Activated CD4-positive, alpha-beta memory T cell treated with anti-CD3 and anti-CD28 coated beads, Interleukin-2, amount 10 ng/mL, durations not matched to agents 7 days and 5 days (primary cell): ENCODE measurements at regions of chr3 and their contacts with region 1.

Region 1: GRCh38 chr3:195850857-195851543 is 39.3 kb upstream of the MUC4 start:
- DNase-seq: peak; percentile 91
- H3K4me3 Mint-ChIP-seq: peak overlapping the region; percentile 2
- H3K27ac Mint-ChIP-seq: no peak overlapping the region
- H3K4me1 Mint-ChIP-seq: peaks cover 7% of the 10 kb centered on the region
- H3K27me3 Mint-ChIP-seq: no peaks in the 10 kb centered on the region

Region 2: GRCh38 chr3:195690951-195691490 is 160.0 kb before region 1 on chr3:
- CTCF ChIA-PET with region 1: no interaction called
- POLR2A ChIA-PET with region 1: no interaction called
- DNase-seq: no peak
- H3K4me3 Mint-ChIP-seq: no peak overlapping the region
- H3K27ac Mint-ChIP-seq: peak overlapping the region; percentile 54
- H3K4me1 Mint-ChIP-seq: peaks cover 26% of the 10 kb centered on the region
- H3K27me3 Mint-ChIP-seq: no peaks in the 10 kb centered on the region

Region 3: DNA sequence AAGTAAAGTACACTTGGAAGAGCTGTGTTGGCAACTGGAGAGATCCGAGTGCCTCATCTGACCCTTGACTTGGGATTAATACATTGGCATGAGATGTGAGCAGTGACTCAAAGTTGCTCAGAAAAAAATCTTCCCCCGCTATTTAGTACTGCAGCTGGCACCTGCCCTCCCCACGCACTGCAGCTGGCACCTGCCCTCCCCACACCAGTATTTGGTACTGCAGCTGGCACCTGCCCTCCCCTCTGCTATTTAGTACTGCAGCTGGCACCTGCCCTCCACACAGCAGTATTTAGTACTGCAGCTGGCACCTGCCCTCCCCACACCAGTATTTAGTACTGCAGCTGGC is 134.2 kb before region 1 on chr3:
- CTCF ChIA-PET with region 1: interaction called, 10 read pairs
- POLR2A ChIA-PET with region 1: no interaction called
- DNase-seq: no peak
- H3K4me3 Mint-ChIP-seq: no peak overlapping the region
- H3K27ac Mint-ChIP-seq: no peak overlapping the region
- H3K4me1 Mint-ChIP-seq: peaks cover 4% of the 10 kb centered on the region
- H3K27me3 Mint-ChIP-seq: no peaks in the 10 kb centered on the region

Region 4: GRCh38 chr3:195801336-195802183 is 49.4 kb before region 1 on chr3:
- CTCF ChIA-PET with region 1: interaction called, 10 read pairs
- POLR2A ChIA-PET with region 1: no interaction called
- DNase-seq: no peak
- H3K4me3 Mint-ChIP-seq: peak overlapping the region; percentile 42
- H3K27ac Mint-ChIP-seq: peak overlapping the region; percentile 71
- H3K4me1 Mint-ChIP-seq: peaks cover 52% of the 10 kb centered on the region
- H3K27me3 Mint-ChIP-seq: peaks cover 13% of the 10 kb centered on the region

Region 5: DNA sequence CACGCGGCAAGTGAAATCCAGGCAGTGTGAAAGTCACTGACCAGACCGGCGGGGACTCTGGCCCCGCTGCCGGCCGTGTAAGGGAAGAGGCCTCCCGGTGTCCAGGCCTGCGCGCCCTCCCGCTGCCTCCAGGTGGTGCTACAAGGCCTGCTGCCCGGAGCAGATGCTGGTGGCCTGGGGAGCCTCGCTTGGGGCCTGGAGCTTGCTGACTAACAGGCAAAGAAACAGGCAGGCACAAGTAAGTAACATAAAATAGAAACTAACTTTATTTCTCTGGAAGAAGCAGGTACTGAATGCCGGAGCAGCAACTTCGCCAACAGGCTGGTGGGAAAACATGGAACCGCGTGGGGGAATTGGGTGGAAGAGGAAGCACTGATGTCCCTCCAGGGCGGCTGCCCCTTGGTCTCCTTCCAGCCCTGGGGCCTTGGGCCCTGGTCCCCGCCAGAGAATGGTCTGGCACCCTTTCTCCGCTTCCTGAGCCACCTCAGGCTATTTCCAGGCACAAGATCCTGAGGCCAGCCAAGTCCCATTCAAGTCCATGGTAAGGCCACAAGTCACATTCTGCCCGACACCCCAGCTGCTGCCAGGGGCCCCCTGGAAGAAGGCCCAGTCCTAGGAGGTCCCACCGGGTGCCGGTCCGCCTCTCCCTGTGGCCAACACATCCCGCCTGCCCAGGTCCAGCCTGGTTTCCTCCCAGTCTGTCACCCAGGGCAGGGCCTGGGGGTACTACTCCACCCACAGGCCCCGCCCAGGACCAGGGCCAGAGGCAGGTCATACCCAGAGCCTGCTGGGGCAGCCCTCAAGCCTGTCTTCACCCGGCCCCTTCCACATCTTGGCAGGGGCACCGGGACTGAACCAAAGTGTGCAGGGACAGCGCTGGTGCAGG is 12.4 kb after region 1 on chr3:
- CTCF ChIA-PET with region 1: interaction called, 24 read pairs
- POLR2A ChIA-PET with region 1: no interaction called
- DNase-seq: peak; percentile 65
- H3K4me3 Mint-ChIP-seq: no peak overlapping the region
- H3K27ac Mint-ChIP-seq: no peak overlapping the region
- H3K4me1 Mint-ChIP-seq: peaks cover 6% of the 10 kb centered on the region
- H3K27me3 Mint-ChIP-seq: peaks cover 5% of the 10 kb centered on the region

Region 6: DNA sequence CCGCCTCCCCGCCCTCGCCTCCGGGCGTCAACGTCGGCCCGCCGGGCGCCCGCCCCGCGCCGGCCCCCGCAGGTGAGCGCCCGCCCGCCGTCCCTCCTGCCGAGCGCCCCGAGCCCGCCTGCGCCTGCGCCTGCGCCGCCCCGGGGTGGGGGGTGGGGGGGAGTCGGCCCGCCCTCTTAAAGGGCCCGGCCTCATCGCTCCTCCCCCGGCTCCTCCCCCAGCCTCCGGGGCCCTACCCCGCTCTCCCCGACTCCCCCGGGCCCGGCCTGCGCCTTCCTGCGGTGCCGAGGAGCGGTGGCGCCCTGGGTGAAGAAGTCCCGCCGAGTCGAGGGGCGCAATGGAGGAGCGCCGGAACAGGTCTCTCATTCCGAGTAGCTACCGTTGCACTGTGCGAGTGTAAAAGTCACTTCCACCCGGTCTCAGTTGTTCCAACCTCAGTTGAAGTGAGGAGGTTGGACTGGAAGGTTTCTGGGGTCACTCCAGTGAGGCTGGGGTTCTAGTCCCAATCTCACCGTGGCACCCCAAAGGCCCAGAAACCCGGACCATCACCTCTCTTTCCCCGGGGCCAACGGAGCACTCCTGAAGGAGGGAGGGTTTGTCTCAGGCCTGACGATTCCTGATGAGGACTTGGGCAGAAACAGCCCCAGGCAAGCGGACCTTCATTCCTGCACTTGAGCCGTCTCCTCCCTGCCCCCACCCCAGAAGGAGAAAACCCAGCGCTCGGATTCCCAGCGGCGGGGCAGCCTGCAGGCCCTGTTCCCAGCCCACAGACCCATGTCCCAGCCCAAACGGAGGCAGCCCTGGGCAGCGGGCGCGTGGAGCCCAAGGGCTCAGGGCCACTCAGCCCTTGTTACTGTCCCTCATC is 58.9 kb after region 1 on chr3:
- CTCF ChIA-PET with region 1: interaction called, 60 read pairs
- POLR2A ChIA-PET with region 1: interaction called, 3 read pairs
- DNase-seq: peak; percentile 89
- H3K4me3 Mint-ChIP-seq: peak overlapping the region; percentile 68
- H3K27ac Mint-ChIP-seq: peak overlapping the region; percentile 80
- H3K4me1 Mint-ChIP-seq: peaks cover 30% of the 10 kb centered on the region
- H3K27me3 Mint-ChIP-seq: no peaks in the 10 kb centered on the region

Region 7: GRCh38 chr3:196012481-196012880 is 161.5 kb after region 1 on chr3:
- CTCF ChIA-PET with region 1: no interaction called
- POLR2A ChIA-PET with region 1: no interaction called
- DNase-seq: no peak
- H3K4me3 Mint-ChIP-seq: no peak overlapping the region
- H3K27ac Mint-ChIP-seq: no peak overlapping the region
- H3K4me1 Mint-ChIP-seq: no peaks in the 10 kb centered on the region
- H3K27me3 Mint-ChIP-seq: peaks cover 20% of the 10 kb centered on the region